ENCODE measurements at regions of chr16 and their contacts with region 1.

Region 1: DNA sequence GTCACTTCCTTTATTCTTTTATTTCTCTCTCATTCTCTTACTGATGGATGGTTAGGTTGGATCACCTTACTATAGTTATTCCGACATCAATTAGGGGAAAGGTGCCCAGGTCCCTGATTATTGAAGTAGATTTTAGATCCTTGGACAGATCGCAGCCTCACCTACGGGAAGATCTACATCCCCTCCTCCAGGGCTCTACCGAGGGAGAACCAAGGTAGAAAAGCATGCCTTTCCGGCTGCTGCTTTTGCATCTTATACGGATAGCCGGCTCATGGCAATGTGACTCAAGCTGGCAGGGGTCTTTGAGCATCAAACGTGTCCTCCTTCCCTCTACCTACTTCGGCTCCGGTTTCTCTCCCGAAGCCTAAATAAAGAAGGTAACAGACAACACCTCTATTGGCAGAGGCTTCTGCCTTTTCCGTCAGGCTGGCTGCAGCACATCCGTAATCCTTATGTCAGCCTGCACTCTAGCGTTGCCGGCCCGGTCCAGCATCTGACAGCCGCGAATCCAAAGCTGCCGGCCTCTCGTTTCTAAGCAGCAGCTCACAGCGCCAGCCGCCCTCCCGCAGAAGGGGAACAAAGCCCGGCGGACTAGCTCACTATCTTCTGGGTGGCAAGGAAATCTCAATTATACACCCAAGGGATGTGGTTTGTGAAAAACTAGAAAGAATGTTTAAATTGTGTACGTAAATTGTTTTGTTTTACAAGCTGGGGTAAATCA is 46.9 kb downstream of the IRX6 start:
- DNase-seq: no peak
- H3K4me3 Mint-ChIP-seq: no peak overlapping the region
- H3K27ac Mint-ChIP-seq: no peak overlapping the region
- H3K4me1 Mint-ChIP-seq: peaks cover 4% of the 10 kb centered on the region
- H3K27me3 Mint-ChIP-seq: no peaks in the 10 kb centered on the region
- CTCF ChIP-seq: no peak

Region 2: DNA sequence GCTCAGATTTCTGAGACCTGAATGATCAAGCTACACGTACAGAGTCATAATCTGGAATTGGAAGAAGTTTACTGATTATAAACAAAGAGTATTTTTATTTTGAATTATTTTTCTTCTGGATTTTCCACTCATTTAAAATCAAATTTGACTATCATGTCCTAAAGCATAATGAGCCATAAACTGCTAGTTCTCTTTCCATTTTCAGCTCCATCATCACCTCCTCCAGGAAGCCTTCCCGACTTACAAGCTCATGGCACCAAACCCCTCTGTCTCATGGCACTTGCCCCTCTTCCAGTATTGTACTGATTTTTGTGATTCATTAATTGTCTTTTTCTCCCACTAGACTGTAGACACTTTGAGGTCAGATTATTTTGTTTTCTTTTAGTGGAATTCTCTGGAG is 11.0 kb before region 1 on chr16:
- CTCF ChIA-PET with region 1: interaction called, 10 read pairs
- POLR2A ChIA-PET with region 1: interaction called, 3 read pairs
- intact Hi-C with region 1: no loop called
- DNase-seq: no peak
- H3K4me3 Mint-ChIP-seq: no peak overlapping the region
- H3K27ac Mint-ChIP-seq: no peak overlapping the region
- H3K4me1 Mint-ChIP-seq: no peaks in the 10 kb centered on the region
- H3K27me3 Mint-ChIP-seq: peaks cover 52% of the 10 kb centered on the region
- CTCF ChIP-seq: no peak

Measured in MCF 10A (cell line).